BJ (cell line): ENCODE measurements at regions of chr16 and their contacts with region 1.

Region 1: DNA sequence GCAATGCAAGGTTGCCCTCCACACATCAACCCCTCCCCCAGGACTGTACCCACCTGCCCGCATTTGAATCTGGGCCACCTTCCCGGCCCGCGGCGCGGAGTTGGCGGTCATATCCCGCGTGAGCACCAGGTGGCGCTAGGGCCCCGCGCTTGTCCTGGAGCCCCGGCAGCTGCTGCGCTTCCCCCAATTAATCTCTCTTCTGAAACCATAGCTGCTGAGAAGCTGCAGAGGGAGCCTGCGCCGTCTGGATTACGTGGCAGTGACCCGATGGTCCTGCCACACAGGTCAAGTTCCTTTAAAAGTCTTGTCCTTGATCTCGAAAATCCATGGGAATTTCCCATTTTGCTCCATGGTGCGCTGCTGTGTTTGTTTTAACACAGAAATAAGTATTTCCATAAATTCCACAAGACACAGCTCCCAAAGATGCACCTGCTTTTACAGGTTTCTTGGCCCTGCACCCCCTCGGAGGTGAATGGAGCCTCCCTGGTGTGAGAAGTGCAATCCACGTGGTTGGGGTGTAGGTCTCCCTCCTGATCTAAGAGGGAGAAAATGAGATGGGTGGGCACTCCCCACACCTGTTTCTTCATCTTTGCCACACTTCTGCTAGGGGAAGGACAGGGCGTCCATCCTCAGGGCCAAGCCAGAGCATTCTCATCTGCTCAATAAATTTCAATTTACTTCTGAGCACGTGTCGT is 22.1 kb downstream of the COX4I1 start:
- DNase-seq: no peak
- H3K4me3 ChIP-seq: no peak overlapping the region
- H3K27me3 ChIP-seq: peaks cover 15% of the 10 kb centered on the region
- CTCF ChIP-seq: peak; percentile 90

Region 2: GRCh38 chr16:85781695-85782370 is 39.8 kb before region 1 on chr16:
- CTCF ChIA-PET with region 1: no interaction called
- POLR2A ChIA-PET with region 1: no interaction called
- DNase-seq: no peak
- H3K4me3 ChIP-seq: no peak overlapping the region
- H3K27me3 ChIP-seq: no peaks in the 10 kb centered on the region
- CTCF ChIP-seq: no peak

Region 3: DNA sequence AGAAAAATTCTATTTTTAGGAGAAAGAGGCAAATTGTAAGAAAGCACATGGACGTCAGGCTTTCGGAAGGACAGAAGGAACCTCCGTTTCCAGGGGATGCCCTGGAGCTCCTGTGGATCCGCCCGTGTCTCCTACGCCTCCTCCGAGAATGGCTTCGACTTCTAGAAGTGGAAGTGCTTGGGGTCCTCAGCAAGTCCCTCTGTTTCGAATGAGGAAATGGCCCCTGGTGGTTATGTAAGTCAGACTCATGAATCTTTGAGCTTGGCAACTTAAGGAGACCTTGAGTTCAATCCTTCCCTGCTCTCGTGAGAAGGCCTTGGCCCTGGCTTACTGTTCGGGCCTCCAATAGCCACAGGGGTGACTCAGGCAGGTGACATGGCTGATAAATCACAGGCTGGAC is 16.8 kb after region 1 on chr16:
- CTCF ChIA-PET with region 1: interaction called, 16 read pairs
- POLR2A ChIA-PET with region 1: no interaction called
- DNase-seq: no peak
- H3K4me3 ChIP-seq: no peak overlapping the region
- H3K27me3 ChIP-seq: peaks cover 4% of the 10 kb centered on the region
- CTCF ChIP-seq: no peak

Region 4: DNA sequence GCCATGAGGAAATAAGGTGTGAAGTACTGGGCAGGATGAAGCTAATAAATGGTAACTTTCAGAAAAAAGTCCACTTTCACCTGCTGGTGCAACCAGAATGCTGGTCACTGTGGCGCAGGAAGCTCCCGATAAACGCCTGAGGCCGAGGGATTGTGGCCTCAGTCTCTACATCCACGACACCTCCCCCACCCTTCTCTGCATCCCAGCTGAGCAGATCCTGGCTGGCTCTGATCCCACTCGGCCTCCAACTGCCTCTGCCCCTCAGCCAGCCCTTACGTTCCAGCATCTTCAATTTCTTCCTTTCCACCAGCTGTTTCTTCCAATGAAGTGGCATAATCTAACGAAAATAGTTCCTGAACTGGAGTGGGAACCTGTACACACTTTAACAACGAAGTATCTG is 27.4 kb after region 1 on chr16:
- CTCF ChIA-PET with region 1: no interaction called
- POLR2A ChIA-PET with region 1: no interaction called
- DNase-seq: no peak
- H3K4me3 ChIP-seq: no peak overlapping the region
- H3K27me3 ChIP-seq: peaks cover 6% of the 10 kb centered on the region
- CTCF ChIP-seq: no peak

Region 5: GRCh38 chr16:85995541-85996423 is 174.2 kb after region 1 on chr16:
- CTCF ChIA-PET with region 1: interaction called, 140 read pairs
- POLR2A ChIA-PET with region 1: no interaction called
- DNase-seq: no peak
- H3K4me3 ChIP-seq: 0 out of 2 replicates have a peak overlapping the region, but pooled peaks have one; percentile 3
- H3K27me3 ChIP-seq: peaks cover 36% of the 10 kb centered on the region
- CTCF ChIP-seq: no peak

Region 6: DNA sequence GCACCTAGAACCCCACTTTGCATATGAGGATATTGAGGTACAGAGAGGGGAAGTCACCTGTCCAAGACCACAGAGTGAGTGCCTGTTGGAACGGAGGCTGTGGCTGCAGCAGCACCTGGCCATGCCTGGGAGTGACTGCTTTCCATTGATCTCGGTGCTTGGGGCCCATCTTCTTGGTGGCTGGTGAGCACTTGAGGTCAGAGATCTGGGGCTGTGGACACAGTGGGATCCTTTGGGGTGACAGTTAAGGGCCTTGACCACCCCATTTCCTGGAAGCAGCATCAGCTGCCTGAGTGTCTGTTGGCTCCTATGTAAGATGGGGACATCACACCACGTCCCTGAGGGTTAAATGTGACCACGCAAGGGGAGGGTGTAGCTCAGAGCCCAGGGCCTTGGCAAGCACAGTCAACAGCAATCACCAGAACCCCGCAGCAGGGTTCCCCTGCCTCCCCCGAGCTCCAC is 189.1 kb after region 1 on chr16:
- CTCF ChIA-PET with region 1: interaction called, 158 read pairs
- POLR2A ChIA-PET with region 1: no interaction called
- DNase-seq: no peak
- H3K4me3 ChIP-seq: no peak overlapping the region
- H3K27me3 ChIP-seq: peaks cover 10% of the 10 kb centered on the region
- CTCF ChIP-seq: no peak

Region 7: DNA sequence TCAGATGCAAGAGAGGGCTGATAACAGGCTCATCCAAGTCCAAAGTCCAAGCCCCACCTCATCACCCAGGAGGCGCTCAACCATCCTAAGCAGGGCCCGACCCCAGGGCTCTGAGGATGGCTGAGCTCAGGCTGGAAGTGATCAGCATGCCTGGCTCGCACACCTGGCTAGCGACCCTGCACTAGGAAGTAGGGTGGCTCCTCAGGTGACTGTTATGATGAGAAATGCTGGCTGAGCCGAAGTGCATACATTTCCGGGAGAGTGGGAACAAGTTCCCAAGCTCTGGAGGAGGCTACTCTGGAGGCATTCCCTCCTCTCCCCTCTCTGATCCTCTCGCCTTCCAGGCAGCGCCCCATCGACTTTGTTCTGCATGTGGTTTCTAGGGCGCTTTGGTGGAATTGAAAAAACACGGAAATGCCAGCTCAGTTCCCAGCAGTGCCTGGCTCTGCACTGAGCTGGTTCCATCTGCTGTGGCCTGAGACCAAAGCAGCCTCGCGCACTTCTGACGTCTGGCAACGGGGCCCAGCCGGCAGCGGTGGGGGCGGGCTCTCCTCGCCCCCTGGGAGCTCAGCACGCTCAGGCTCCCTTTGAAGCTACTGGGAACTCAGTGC is 207.6 kb after region 1 on chr16:
- CTCF ChIA-PET with region 1: interaction called, 27 read pairs
- POLR2A ChIA-PET with region 1: no interaction called
- DNase-seq: no peak
- H3K4me3 ChIP-seq: no peak overlapping the region
- H3K27me3 ChIP-seq: peaks cover 11% of the 10 kb centered on the region
- CTCF ChIP-seq: no peak